ENCODE measurements at regions of chr14 and their contacts with region 1.

Region 1: GRCh38 chr14:78598041-78598920 is 428.1 kb downstream of the NRXN3 start:
- DNase-seq: peak; percentile 2 to 35 (median 16)
- H3K4me3 ChIP-seq: no peak overlapping the region
- H3K4me3 Mint-ChIP-seq: no peak overlapping the region
- H3K27ac ChIP-seq: no peak overlapping the region
- H3K27ac Mint-ChIP-seq: no peak overlapping the region
- H3K4me1 ChIP-seq: no peaks in the 10 kb centered on the region
- H3K4me1 Mint-ChIP-seq: no peaks in the 10 kb centered on the region
- H3K27me3 ChIP-seq: no peaks in the 10 kb centered on the region
- H3K27me3 Mint-ChIP-seq: peaks cover 3 to 6% (median 3%) of the 10 kb centered on the region in 3 donors
- CTCF ChIP-seq: peak; percentile 89

Region 2: GRCh38 chr14:77862154-77862786 is 736.0 kb before region 1 on chr14:
- intact Hi-C with region 1: loop called in 1 of 2 experiments (anchors 5 kb)
- DNase-seq: peak; percentile 38 to 60 (median 41)
- H3K4me3 ChIP-seq: no peak overlapping the region
- H3K4me3 Mint-ChIP-seq: no peak overlapping the region
- H3K27ac ChIP-seq: no peak overlapping the region
- H3K27ac Mint-ChIP-seq: peak overlapping the region in 1 of 7 donors; percentile 33
- H3K4me1 ChIP-seq: no peaks in the 10 kb centered on the region
- H3K4me1 Mint-ChIP-seq: no peaks in the 10 kb centered on the region
- H3K27me3 ChIP-seq: no peaks in the 10 kb centered on the region
- H3K27me3 Mint-ChIP-seq: peaks cover 0 to 2% (median 0%) of the 10 kb centered on the region in 3 donors
- CTCF ChIP-seq: peak; percentile 99

Region 3: GRCh38 chr14:78022059-78022458 is 576.2 kb before region 1 on chr14:
- intact Hi-C with region 1: loop called in 1 of 2 experiments (anchors 5 kb)
- DNase-seq: peak; percentile 10 to 56 (median 44)
- H3K4me3 ChIP-seq: no peak overlapping the region
- H3K4me3 Mint-ChIP-seq: no peak overlapping the region
- H3K27ac ChIP-seq: no peak overlapping the region
- H3K27ac Mint-ChIP-seq: no peak overlapping the region
- H3K4me1 ChIP-seq: no peaks in the 10 kb centered on the region
- H3K4me1 Mint-ChIP-seq: peaks cover 3% of the 10 kb centered on the region
- H3K27me3 ChIP-seq: no peaks in the 10 kb centered on the region
- H3K27me3 Mint-ChIP-seq: peaks cover 2 to 7% (median 7%) of the 10 kb centered on the region in 3 donors
- CTCF ChIP-seq: peak; percentile 58

Region 4: DNA sequence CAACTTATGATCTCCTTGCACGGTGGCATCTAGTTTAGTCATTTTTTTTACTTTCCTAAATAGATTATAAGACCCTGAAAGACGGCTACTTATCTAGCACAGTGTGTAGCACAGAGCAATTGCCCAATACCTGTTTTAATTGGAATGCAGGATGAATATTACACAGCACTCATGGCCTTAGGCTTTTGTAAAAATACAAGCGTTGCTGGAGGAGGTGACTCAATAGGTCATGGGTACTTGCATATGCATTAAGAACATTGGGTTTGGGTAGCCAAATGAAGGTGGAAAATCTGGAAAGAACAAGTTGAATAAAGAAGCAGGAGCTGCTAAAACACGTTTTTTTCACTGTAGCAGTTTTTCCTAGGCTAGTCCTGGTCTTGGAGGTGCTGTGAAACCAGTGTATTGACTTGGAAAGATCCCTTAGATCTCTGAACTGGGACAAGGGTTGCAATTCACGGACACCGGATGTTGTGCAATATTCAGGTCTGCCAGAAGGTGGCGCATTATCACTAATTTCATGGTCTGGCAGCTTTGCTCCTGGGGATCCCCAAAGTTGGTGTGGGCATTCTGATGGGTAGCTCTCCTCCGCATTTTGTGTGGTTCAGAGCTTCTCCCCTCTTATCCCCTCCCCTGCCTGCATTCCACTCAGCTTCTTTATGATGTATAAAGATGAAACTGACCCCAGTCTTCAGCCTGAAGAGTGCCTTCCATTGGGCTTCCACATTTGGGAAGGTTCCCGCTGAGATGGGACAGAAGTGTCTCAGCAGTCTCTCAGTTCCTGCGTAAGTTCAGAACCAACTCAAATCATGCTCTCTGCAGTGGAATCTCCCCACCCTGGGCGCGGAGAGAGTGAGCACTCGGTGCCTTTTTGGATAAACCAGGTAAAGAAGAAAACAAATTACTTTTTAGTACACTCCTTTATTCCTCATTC is 149.9 kb before region 1 on chr14:
- intact Hi-C with region 1: loop called in 1 of 2 experiments (anchors 5 kb)
- DNase-seq: peak; percentile 18 to 47 (median 39)
- H3K4me3 ChIP-seq: no peak overlapping the region
- H3K4me3 Mint-ChIP-seq: no peak overlapping the region
- H3K27ac ChIP-seq: no peak overlapping the region
- H3K27ac Mint-ChIP-seq: no peak overlapping the region
- H3K4me1 ChIP-seq: peaks cover 21 to 24% of the 10 kb centered on the region in 2 donors
- H3K4me1 Mint-ChIP-seq: peaks cover 18% of the 10 kb centered on the region
- H3K27me3 ChIP-seq: no peaks in the 10 kb centered on the region
- H3K27me3 Mint-ChIP-seq: peaks cover 2 to 3% (median 3%) of the 10 kb centered on the region in 3 donors
- CTCF ChIP-seq: peak; percentile 85

Region 5: GRCh38 chr14:79044894-79045624 is 446.8 kb after region 1 on chr14:
- intact Hi-C with region 1: no loop called
- DNase-seq: peak in 1 of 3 donors; percentile 12
- H3K4me3 ChIP-seq: no peak overlapping the region
- H3K4me3 Mint-ChIP-seq: no peak overlapping the region
- H3K27ac ChIP-seq: no peak overlapping the region
- H3K27ac Mint-ChIP-seq: no peak overlapping the region
- H3K4me1 ChIP-seq: peaks cover 0 to 5% of the 10 kb centered on the region in 2 donors
- H3K4me1 Mint-ChIP-seq: peaks cover 5% of the 10 kb centered on the region
- H3K27me3 ChIP-seq: no peaks in the 10 kb centered on the region
- H3K27me3 Mint-ChIP-seq: no peaks in the 10 kb centered on the region
- CTCF ChIP-seq: no peak

Region 6: DNA sequence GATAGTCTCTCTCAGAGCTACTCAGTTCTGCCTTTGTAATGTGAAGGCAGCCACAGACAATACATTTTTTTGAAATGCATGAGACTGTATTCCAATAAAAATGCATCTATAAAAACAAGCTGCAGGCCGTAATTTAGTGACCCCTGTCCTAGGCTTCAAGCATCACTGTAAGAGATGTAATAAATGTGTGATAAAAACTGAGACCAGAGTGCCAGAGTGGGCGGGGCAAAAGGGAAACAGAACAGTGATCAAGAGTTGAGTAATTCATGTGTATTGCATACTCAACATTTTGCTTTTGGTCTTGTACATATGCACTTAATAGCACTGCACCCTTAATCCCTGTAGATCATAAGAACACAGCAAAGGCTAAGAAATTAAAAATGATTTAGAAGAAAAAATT is 869.6 kb after region 1 on chr14:
- intact Hi-C with region 1: no loop called
- DNase-seq: no peak
- H3K4me3 ChIP-seq: no peak overlapping the region
- H3K4me3 Mint-ChIP-seq: no peak overlapping the region
- H3K27ac ChIP-seq: no peak overlapping the region
- H3K27ac Mint-ChIP-seq: no peak overlapping the region
- H3K4me1 ChIP-seq: no peaks in the 10 kb centered on the region
- H3K4me1 Mint-ChIP-seq: no peaks in the 10 kb centered on the region
- H3K27me3 ChIP-seq: no peaks in the 10 kb centered on the region
- H3K27me3 Mint-ChIP-seq: peaks cover 0 to 3% (median 0%) of the 10 kb centered on the region in 3 donors
- CTCF ChIP-seq: no peak

Measured in CD14-positive monocyte (primary cell).